ENCODE measurements at regions of chr19 and their contacts with region 1.

Region 1: DNA sequence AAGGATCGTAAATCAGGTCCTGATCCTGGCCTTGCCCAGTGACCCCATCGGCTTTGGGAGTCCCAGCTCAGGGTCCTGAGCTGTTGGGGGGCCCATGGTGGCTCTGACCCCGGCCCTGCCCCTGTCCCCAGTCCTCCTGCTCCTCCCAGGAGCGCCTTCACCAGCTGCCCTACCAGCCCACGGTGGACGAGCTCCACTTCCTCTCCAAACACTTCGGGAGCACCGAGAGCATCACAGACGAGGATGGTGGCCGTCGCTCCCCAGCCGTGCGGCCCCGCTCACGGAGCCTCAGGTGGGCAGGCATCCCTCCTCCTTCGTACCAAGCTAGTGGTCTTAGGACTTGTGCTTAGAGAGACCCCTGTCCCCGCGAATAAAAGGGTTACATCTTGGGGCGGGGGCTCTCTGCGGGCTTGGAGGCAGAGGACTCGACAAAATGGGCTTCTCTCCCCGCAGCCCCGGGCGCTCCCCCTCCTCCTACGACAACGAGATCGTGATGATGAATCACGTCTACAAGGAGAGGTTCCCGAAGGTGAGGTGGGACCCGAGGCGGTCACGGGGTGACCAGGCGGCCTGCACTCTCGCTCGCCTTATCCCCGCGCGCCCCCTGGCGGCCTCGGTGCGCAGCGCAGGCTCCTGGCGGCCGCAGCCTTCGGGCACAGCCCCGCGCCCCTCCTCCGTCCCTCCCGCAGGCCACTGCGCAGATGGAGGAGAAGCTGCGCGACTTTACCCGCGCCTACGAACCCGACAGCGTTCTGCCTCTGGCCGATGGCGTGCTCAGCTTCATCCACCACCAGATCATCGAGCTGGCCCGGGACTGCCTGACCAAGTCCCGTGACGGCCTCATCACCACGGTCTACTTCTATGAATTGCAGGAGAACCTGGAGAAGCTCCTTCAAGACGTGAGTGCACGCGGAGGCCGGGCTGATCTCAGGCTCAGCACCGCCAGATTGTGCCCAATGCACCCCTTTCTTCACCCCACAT is 9.1 kb downstream of the MAST1 start:
- DNase-seq: peak; percentile 87 to 88
- H3K4me3 ChIP-seq: peak overlapping the region in 1 of 3 donors; percentile 2
- H3K27ac ChIP-seq: no peak overlapping the region
- H3K4me1 ChIP-seq: peaks cover 0 to 8% of the 10 kb centered on the region in 2 donors
- H3K27me3 ChIP-seq: peaks cover 2% of the 10 kb centered on the region
- CTCF ChIP-seq: peak; percentile 80 to 99 (median 98)
- POLR2A ChIP-seq: no peak

Region 2: GRCh38 chr19:12666265-12667048 is 181.0 kb before region 1 on chr19 and contains the starts of genes MAN2B1 and WDR83:
- intact Hi-C with region 1: loop called (anchors 10 kb)
- DNase-seq: peak; percentile 71 to 77
- H3K4me3 ChIP-seq: peak within 1 kb of the TSS; percentile 24 to 88 (median 57)
- H3K27ac ChIP-seq: peak within 1 kb of the TSS in 2 of 3 donors; percentile 34 to 39
- H3K4me1 ChIP-seq: peaks cover 21 to 34% of the 10 kb centered on the region in 2 donors
- H3K27me3 ChIP-seq: no peaks in the 10 kb centered on the region
- CTCF ChIP-seq: peak in 1 of 6 experiments; percentile 11
- POLR2A ChIP-seq: peak in 1 of 2 donors; percentile 42
- total RNA-seq, gene MAN2B1: 38.0 to 106 (median 82.5) TPM
- total RNA-seq, gene WDR83: 9.5 to 17.5 (median 14.3) TPM

Region 3: DNA sequence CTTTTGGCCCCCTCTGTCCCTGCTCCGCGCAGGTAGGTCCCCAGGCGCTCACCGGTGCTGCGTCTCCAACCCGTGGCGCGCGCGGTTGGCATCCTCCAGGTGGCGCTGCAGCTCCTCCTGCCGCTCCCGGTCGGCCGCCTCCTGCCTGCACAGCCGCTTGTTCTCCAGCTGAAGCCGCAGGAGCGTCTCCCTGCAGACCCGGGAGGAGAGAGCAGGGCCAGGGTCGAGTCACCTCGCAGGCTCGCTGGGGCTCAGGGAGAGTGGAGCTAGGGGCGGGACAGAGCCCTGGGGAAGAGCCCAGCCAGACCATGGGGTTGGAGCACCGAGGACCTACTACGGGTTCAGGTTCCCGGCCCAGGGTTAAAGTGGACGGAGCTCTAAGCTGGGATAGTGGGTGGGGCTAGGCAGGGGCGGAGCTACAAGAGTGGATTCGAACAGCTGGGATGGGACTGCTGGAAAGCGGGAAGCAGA is 81.4 kb before region 1 on chr19:
- intact Hi-C with region 1: loop called (anchors 5 kb)
- DNase-seq: peak; percentile 57 to 62
- H3K4me3 ChIP-seq: no peak overlapping the region
- H3K27ac ChIP-seq: peak overlapping the region in 1 of 3 donors; percentile 43
- H3K4me1 ChIP-seq: no peaks in the 10 kb centered on the region
- H3K27me3 ChIP-seq: no peaks in the 10 kb centered on the region
- CTCF ChIP-seq: peak in 4 of 6 experiments; percentile 35 to 62 (median 54)
- POLR2A ChIP-seq: no peak

Region 4: GRCh38 chr19:12867120-12868099 is 20.0 kb after region 1 on chr19:
- intact Hi-C with region 1: no loop called
- DNase-seq: peak; percentile 49 to 53
- H3K4me3 ChIP-seq: peak overlapping the region in 1 of 3 donors; percentile 10
- H3K27ac ChIP-seq: no peak overlapping the region
- H3K4me1 ChIP-seq: peaks cover 0 to 7% of the 10 kb centered on the region in 2 donors
- H3K27me3 ChIP-seq: no peaks in the 10 kb centered on the region
- CTCF ChIP-seq: no peak
- POLR2A ChIP-seq: no peak

Region 5: DNA sequence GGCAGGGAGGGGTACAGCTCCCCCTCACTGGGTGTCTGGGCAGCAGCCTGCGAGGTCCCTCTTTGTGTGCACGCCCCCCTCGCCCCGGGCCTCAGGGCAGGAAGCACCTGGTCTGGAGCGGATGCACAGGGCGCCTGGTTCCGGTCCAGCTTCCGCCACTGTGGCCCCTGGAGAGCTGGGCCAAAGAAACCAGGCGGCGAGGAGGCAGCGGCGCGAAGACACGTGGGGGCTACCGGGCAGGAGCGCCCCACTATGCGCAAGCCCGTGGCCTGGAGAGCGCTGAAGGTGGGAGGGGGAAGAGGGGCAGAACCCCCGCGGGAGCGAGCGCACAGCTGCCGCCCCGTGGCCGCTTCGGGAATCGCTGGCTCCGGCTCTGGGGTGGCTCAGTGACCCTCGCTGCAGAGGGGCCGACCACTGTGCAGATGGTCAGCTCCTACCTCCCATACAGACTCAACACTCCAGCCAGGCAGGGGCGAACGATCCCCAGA is 257.0 kb after region 1 on chr19:
- intact Hi-C with region 1: no loop called
- DNase-seq: peak; percentile 43 to 51
- H3K4me3 ChIP-seq: no peak overlapping the region
- H3K27ac ChIP-seq: peak overlapping the region in 1 of 3 donors; percentile 26
- H3K4me1 ChIP-seq: peaks cover 0 to 21% of the 10 kb centered on the region in 2 donors
- H3K27me3 ChIP-seq: no peaks in the 10 kb centered on the region
- CTCF ChIP-seq: peak in 5 of 6 experiments; percentile 44 to 75 (median 50)
- POLR2A ChIP-seq: no peak